Posterior cingulate gyrus (tissue), 11 donors: ENCODE measurements at regions of chr5 and their contacts with region 1.

Region 1: GRCh38 chr5:151499501-151500035 is 52.2 kb downstream of the SLC36A1 start:
- DNase-seq: no peak

Region 2: GRCh38 chr5:151651997-151652645 is 152.6 kb after region 1 on chr5:
- intact Hi-C with region 1: loop called (anchors 5 kb)
- DNase-seq: peak; percentile 67 to 97 (median 84)